ENCODE measurements at regions of chr11 and their contacts with region 1.

Region 1: GRCh38 chr11:47213985-47214564 is 699 bp upstream of the DDB2 start:
- DNase-seq: peak; percentile 93
- H3K27ac ChIP-seq: peak overlapping the region; percentile 99
- CTCF ChIP-seq: no peak

Region 2: GRCh38 chr11:47143322-47143721 is 70.8 kb before region 1 on chr11:
- CTCF ChIA-PET with region 1: no interaction called
- POLR2A ChIA-PET with region 1: no interaction called
- DNase-seq: peak; percentile 41
- H3K27ac ChIP-seq: no peak overlapping the region
- CTCF ChIP-seq: no peak

Region 3: GRCh38 chr11:47186076-47186936 is 27.8 kb before region 1 on chr11 and contains the start of gene PACSIN3:
- CTCF ChIA-PET with region 1: interaction called, 11 read pairs
- POLR2A ChIA-PET with region 1: interaction called, 70 read pairs
- DNase-seq: peak; percentile 55
- H3K27ac ChIP-seq: peak within 1 kb of the TSS; percentile 98
- CTCF ChIP-seq: no peak; the same call in 1 of the 2 replicates

Measured in RWPE1 (cell line).